Common myeloid progenitor, CD34-positive (primary cell): ENCODE measurements at regions of chr10 and their contacts with region 1.

Region 1: DNA sequence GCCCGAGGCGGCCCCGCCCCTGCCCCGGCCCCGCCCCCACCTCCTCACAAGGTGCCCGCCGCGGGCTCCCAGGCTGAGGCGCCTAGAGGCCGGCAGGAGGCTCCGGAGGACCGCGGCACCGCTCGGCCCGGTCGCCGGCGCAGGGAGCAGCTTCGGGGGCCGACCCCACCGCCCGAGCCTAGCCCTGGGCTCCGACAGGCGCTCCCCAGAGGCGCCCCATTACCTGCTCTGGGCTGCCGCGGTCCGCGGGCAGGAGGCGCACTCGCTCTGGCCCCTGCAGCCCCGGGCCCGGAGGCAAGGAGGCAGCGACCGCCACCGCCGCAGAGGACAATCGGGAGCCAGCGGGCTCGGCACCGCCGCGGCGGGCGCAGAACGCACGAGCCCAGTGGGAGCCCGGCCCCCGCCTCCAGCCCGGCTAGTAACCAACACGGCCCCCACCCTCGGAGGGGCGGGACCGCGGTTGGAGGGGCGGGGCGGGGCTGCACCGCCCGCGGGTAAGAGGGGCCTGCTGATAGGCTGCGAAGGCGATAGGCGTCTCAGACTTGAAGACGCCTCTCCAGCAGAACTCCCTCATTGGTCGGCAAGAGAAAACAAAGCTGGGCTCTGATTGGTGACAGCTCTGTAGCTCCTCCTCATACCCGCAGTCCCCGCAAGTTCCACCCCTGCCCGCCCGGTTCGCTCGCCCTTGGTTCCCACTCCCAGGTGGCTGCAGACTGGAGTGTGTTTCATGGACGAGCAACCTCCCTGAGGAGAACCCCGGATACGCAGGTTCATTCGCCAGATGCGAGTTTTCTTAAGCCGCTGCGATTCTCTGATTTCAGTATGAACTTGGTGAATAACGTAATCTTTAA is at the start of gene MPP7:
- DNase-seq: peak; percentile 99
- H3K4me3 ChIP-seq: peak within 1 kb of the TSS; percentile 71 to 99 (median 87)
- H3K27ac ChIP-seq: peak within 1 kb of the TSS; percentile 64 to 81
- H3K4me1 ChIP-seq: peaks cover 15 to 25% (median 20%) of the 10 kb centered on the region in 4 experiments
- H3K27me3 ChIP-seq: no peaks in the 10 kb centered on the region

Region 2: GRCh38 chr10:28250782-28251181 is 52.1 kb before region 1 on chr10:
- CTCF ChIA-PET with region 1: interaction called, 38 read pairs
- POLR2A ChIA-PET with region 1: interaction called, 3 read pairs
- DNase-seq: peak; percentile 25 to 51 (median 27)
- H3K4me3 ChIP-seq: no peak overlapping the region
- H3K27ac ChIP-seq: no peak overlapping the region
- H3K4me1 ChIP-seq: peaks cover 11 to 19% (median 14%) of the 10 kb centered on the region in 4 experiments
- H3K27me3 ChIP-seq: no peaks in the 10 kb centered on the region

Region 3: GRCh38 chr10:28326516-28327490 is 23.9 kb after region 1 on chr10:
- CTCF ChIA-PET with region 1: interaction called, 23 read pairs
- POLR2A ChIA-PET with region 1: interaction called, 3 read pairs
- DNase-seq: peak in 2 of 3 donors; percentile 63 to 72
- H3K4me3 ChIP-seq: peak overlapping the region in 4 of 7 experiments; percentile 25 to 49 (median 36)
- H3K27ac ChIP-seq: peak overlapping the region in 1 of 2 experiments; percentile 36
- H3K4me1 ChIP-seq: peaks cover 23 to 50% (median 33%) of the 10 kb centered on the region in 4 experiments
- H3K27me3 ChIP-seq: no peaks in the 10 kb centered on the region

Region 4: DNA sequence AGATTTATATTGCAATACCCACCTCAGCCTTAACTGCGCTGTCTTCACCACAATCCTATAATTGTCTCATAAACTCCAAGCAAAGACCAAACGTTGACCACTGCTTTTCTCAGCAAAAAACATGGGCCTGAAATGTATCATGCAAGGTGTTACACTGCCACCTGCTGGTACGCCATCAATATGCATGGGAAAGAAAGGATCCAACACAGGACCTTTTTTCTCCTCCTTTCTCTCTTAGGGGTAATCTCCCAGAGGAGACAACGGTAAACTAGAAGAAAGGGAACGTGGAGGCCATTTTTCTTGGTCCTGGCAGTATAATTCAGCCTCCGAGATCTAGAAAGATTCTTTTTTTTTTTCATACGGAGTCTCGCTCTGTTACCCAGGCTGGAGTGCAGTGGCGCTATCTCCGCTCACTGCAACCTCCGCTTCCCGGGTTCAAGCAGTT is 79.1 kb after region 1 on chr10:
- CTCF ChIA-PET with region 1: interaction called, 179 read pairs
- POLR2A ChIA-PET with region 1: no interaction called
- DNase-seq: peak; percentile 93 to 97 (median 96)
- H3K4me3 ChIP-seq: no peak overlapping the region
- H3K27ac ChIP-seq: no peak overlapping the region
- H3K4me1 ChIP-seq: peaks cover 0 to 9% (median 2%) of the 10 kb centered on the region in 4 experiments
- H3K27me3 ChIP-seq: no peaks in the 10 kb centered on the region